ENCODE measurements at regions of chr10 and their contacts with region 1.

Region 1: DNA sequence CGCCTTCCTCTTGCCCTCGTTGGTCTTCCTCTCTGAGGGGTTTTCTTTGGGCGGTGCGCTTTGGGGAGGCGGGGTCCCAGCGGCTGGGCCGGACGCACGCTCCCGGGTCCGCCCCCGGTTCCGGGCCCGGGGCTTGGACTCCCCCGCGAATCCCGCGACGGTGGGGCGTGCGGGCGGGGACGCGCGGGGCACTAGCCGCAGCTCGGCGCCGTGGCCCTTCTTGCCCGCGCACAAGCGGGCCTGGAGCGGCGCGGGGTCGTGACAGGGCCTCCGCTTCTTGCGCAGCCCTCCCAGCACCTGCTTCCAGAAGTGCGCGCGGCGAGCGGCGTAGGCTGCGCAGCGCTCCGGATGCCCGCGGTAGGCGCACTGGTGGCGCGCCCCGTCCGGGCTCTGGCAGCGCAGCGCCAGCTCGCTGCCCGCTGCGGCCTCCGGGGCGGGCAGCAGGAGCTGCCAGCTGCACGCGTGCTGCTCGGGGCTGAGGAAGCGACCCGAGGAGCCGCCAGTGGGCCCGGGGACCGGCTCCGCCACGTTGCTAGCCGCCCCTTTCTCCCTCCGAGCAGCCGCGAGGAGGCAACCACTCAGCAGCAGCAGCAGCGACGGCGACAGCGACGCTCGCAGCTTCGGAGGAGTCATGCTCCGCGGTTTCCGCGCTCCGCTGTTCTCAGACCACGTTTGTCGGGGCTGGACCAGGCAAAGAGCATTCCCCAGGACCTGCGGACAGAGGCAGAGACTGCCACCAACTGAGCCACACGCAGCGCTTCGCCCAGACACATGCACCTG is 759 bp downstream of the FGFBP3 start:
- DNase-seq: peak; percentile 67
- ATAC-seq: peak; percentile 91
- H3K4me3 ChIP-seq: peak overlapping the region; percentile 72
- H3K27ac ChIP-seq: peak overlapping the region; percentile 24; the same call in 1 of the 2 replicates
- H3K4me1 ChIP-seq: no peaks in the 10 kb centered on the region
- H3K27me3 ChIP-seq: no peaks in the 10 kb centered on the region
- CTCF ChIP-seq: peak; percentile 38
- POLR2A ChIP-seq: no peak
- RAD21 ChIP-seq: no peak; the same call in 1 of the 2 replicates

Region 2: DNA sequence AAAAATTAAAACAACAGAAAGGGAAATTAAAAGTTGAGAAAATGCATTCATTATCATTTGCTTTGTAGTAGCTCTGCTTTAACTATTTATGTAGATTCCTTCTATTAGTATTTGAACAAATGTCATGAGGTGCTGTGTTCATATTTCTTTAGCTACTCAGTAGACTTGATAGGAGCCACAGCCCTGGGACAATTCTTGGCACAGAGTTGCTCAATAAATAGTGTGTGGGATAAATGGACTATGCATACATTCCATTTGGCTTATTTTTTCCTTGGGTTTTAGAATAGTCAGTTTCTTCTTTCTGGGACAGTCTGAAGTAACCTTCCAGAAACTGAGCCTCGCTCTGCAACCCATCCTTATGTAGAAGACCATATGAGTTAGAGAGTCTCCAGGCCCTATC is 1023.4 kb before region 1 on chr10:
- CTCF ChIA-PET with region 1: no interaction called
- POLR2A ChIA-PET with region 1: no interaction called
- dilution Hi-C with region 1: no loop called
- in situ Hi-C with region 1: no loop called
- intact Hi-C with region 1: loop called (anchors 5 kb)
- DNase-seq: peak; percentile 85
- ATAC-seq: peak; percentile 86
- H3K4me3 ChIP-seq: no peak overlapping the region
- H3K27ac ChIP-seq: peak overlapping the region; percentile 36
- H3K4me1 ChIP-seq: peaks cover 17% of the 10 kb centered on the region
- H3K27me3 ChIP-seq: no peaks in the 10 kb centered on the region
- CTCF ChIP-seq: no peak
- POLR2A ChIP-seq: no peak
- RAD21 ChIP-seq: no peak

Region 3: DNA sequence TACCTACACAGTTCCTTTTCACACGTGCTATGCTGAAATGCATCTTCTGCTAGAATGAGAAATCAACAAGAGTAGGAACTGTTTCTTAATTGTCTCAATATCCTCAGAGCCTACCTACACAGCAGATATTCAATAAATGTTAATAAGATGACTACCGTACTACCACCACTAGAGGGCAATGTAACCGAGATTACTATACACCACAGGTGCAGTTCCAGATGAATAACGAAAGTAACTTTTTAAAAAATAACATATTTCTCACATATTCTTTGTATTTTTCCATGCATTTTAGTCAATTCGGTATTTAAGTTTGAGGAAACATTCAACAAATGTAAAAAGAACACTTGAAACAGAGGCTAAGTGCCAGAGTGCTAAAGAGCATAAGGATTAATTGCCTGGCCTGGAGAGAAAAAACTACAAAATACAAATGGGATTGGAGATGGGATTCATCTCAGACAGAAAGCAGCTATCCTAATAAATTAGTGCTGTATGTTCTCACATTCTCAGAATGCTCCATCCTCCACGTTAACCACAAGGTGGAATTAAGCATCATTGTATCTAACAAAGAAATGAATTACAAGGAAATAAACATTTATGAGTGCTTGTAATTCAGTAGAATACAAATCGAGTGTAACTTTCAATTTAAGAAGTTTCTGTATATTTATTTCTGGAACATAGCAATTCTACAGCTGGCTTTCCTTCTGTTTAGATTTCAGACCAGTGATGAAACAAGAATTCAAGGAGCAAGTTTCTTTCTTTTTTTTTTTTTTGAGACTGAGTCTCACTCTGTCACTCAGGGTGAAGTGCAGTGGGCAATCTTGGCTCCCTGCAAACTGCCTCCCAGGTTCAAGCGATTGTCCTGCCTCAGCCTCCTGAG is 518.7 kb before region 1 on chr10:
- CTCF ChIA-PET with region 1: no interaction called
- POLR2A ChIA-PET with region 1: no interaction called
- dilution Hi-C with region 1: no loop called
- in situ Hi-C with region 1: loop called (anchors 25 kb)
- intact Hi-C with region 1: loop called (anchors 5 kb)
- DNase-seq: peak; percentile 71
- ATAC-seq: peak; percentile 79
- H3K4me3 ChIP-seq: peak overlapping the region; percentile 37; the same call in 1 of the 2 replicates
- H3K27ac ChIP-seq: peak overlapping the region; percentile 37; the same call in 1 of the 2 replicates
- H3K4me1 ChIP-seq: peaks cover 3% of the 10 kb centered on the region; the same call in 1 of the 2 replicates
- H3K27me3 ChIP-seq: peaks cover 21% of the 10 kb centered on the region
- CTCF ChIP-seq: peak; percentile 64
- POLR2A ChIP-seq: no peak
- RAD21 ChIP-seq: peak; percentile 65

Region 4: GRCh38 chr10:91758303-91759146 is 150.0 kb before region 1 on chr10:
- CTCF ChIA-PET with region 1: interaction called, 3 read pairs
- POLR2A ChIA-PET with region 1: no interaction called
- dilution Hi-C with region 1: no loop called
- in situ Hi-C with region 1: no loop called
- intact Hi-C with region 1: loop called (anchors 1 kb)
- DNase-seq: peak; percentile 75
- ATAC-seq: peak; percentile 65
- H3K4me3 ChIP-seq: no peak overlapping the region
- H3K27ac ChIP-seq: no peak overlapping the region
- H3K4me1 ChIP-seq: peaks cover 8% of the 10 kb centered on the region
- H3K27me3 ChIP-seq: no peaks in the 10 kb centered on the region; the same call in 1 of the 2 replicates
- CTCF ChIP-seq: peak; percentile 64
- POLR2A ChIP-seq: no peak
- RAD21 ChIP-seq: peak; percentile 74

Measured in IMR-90 (cell line).